H1 (cell line): ENCODE measurements at regions of chr2 and their contacts with region 1.

Region 1: GRCh38 chr2:162035981-162036380 is 38.0 kb downstream of the DPP4 start:
- DNase-seq: no peak
- H3K4me3 ChIP-seq: no peak overlapping the region
- H3K27ac ChIP-seq: no peak overlapping the region
- H3K4me1 ChIP-seq: peaks cover 0 to 7% (median 4%) of the 10 kb centered on the region in 4 experiments; a peak in 3 of 7 replicates
- H3K27me3 ChIP-seq: no peaks in the 10 kb centered on the region
- CTCF ChIP-seq: no peak
- EP300 ChIP-seq: no peak
- POLR2A ChIP-seq: no peak
- RAD21 ChIP-seq: no peak

Region 2: DNA sequence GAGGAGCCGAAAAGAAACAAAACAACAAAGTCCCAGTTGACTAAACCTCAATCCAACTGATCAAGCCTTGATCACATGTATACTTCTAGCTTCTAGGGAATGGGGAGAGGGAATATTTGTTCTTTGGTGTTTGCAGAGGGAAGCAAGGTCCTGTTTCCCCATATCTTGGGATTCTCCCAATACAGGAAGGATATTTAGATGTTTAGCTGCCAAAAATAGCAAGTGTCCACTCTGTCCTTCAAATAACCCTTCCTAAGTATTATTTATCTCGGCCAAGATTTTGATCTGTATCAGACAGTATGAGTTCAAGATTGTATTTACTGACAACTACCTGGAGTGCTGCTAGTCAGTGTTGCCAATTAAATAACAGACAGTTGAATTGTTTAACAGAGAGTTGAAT is 564.4 kb before region 1 on chr2:
- CTCF ChIA-PET with region 1: no interaction called
- POLR2A ChIA-PET with region 1: no interaction called
- DNase-seq: no peak
- H3K4me3 ChIP-seq: no peak overlapping the region
- H3K27ac ChIP-seq: no peak overlapping the region
- H3K4me1 ChIP-seq: no peaks in the 10 kb centered on the region
- H3K27me3 ChIP-seq: no peaks in the 10 kb centered on the region
- CTCF ChIP-seq: no peak
- EP300 ChIP-seq: no peak
- POLR2A ChIP-seq: no peak
- RAD21 ChIP-seq: no peak

Region 3: GRCh38 chr2:162025121-162026031 is 10.6 kb before region 1 on chr2:
- CTCF ChIA-PET with region 1: interaction called, 10 read pairs
- POLR2A ChIA-PET with region 1: no interaction called
- DNase-seq: no peak
- H3K4me3 ChIP-seq: no peak overlapping the region
- H3K27ac ChIP-seq: no peak overlapping the region
- H3K4me1 ChIP-seq: peaks cover 0 to 3% (median 0%) of the 10 kb centered on the region in 4 experiments; a peak in 2 of 7 replicates
- H3K27me3 ChIP-seq: no peaks in the 10 kb centered on the region
- CTCF ChIP-seq: no peak
- EP300 ChIP-seq: no peak
- POLR2A ChIP-seq: no peak
- RAD21 ChIP-seq: no peak

Region 4: DNA sequence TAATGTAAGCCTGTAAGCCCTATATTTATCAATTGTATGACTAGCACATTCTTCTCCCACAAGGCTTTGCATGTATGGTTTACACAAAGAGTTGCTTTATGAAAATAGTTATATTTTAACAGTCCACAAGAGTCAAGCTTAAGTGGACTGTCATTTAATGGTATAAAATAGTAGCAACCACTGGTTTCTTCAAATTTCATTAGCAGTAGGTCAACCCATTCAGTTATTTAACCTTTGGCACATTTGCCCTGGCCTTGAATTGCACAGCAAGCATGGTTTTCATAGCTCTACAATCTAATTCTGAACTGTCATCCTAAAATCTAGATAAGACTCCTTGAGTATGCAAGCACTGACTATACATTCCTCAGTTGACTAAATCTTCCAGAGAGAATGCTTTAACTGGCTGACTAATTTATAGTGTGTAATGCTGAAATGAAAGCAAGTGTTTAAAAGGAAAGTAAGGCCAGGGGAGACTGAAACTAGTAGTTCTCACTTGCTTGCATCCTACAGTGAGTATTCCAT is 36.3 kb after region 1 on chr2:
- CTCF ChIA-PET with region 1: no interaction called
- POLR2A ChIA-PET with region 1: no interaction called
- DNase-seq: no peak
- H3K4me3 ChIP-seq: no peak overlapping the region
- H3K27ac ChIP-seq: no peak overlapping the region
- H3K4me1 ChIP-seq: peaks cover 3 to 16% (median 13%) of the 10 kb centered on the region in 4 experiments
- H3K27me3 ChIP-seq: peaks cover 0 to 15% (median 12%) of the 10 kb centered on the region in 4 experiments; a peak in 5 of 7 replicates
- CTCF ChIP-seq: no peak
- EP300 ChIP-seq: no peak
- POLR2A ChIP-seq: no peak
- RAD21 ChIP-seq: no peak